Activated T-helper 1 cell treated with anti-CD3 and anti-CD28 coated beads, Interleukin-12 subunit alpha, Interleukin-12 subunit beta, Interleukin-2, Interleukin-4 antibody, amounts not matched to agents 30 ng/mL and 10 ng/mL and 1 ng/mL, durations not matched to agents 14 hours and 24 hours and 36 hours (primary cell): ENCODE measurements at regions of chr11 and their contacts with region 1.

Region 1: DNA sequence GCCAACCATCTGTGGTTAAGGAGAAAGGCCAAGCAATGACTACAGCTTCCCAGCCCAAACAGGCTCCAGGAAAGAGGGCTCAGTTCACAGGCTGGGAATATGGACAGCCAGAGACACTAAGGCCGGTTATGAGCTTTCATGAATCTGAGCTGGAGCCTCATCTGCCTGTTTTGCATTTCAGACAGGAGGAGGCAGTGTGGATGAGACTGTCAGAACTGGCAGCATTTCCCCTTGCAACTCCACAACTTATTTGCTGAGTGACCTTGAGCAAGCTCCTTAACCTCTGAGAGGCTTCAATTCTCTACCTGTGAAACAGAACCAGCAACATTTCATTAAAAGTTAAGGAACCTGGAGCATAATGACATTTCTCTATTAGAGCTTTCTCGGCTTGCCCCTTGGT is 264.0 kb downstream of the ETS1 start:
- DNase-seq: no peak
- H3K4me3 Mint-ChIP-seq: peak overlapping the region; percentile 70
- H3K27ac Mint-ChIP-seq: peak overlapping the region; percentile 95
- H3K4me1 Mint-ChIP-seq: peaks cover 91% of the 10 kb centered on the region
- H3K27me3 Mint-ChIP-seq: no peaks in the 10 kb centered on the region

Region 2: GRCh38 chr11:128135451-128135850 is 187.9 kb before region 1 on chr11:
- intact Hi-C with region 1: no loop called
- DNase-seq: no peak
- H3K4me3 Mint-ChIP-seq: no peak overlapping the region
- H3K27ac Mint-ChIP-seq: no peak overlapping the region
- H3K4me1 Mint-ChIP-seq: no peaks in the 10 kb centered on the region
- H3K27me3 Mint-ChIP-seq: peaks cover 3% of the 10 kb centered on the region

Region 3: DNA sequence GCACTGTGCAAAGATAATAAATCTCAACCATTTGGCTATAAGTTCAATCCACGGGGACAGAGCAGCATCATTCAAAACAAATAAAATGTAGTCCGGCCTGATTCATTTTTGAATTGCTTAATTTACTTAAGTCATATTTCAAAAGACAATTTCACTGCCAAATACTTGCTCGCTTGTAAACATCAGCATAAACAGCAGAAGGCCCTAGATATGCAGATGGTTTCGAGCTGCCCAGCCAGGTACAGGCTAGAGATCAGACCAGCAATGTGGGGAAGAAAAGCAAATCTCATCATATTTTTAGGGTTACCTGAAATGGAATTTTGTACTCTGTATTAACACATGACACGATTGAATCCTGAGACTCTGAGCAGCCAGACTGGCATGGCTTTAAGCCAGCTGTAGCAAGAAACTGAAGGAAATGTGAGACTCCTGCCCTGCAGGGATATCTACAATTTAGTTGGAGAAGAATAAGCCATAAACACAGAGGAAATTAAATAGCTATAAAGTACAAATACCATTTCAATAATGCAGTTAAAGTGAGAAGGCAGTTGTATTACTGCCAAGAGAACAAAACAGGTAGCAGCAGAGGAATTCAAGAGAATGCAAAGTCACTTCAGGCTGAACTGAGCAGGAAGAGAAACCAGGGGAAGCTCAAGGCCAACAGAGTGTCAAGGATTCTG is 176.3 kb before region 1 on chr11:
- intact Hi-C with region 1: no loop called
- DNase-seq: no peak
- H3K4me3 Mint-ChIP-seq: no peak overlapping the region
- H3K27ac Mint-ChIP-seq: no peak overlapping the region
- H3K4me1 Mint-ChIP-seq: no peaks in the 10 kb centered on the region
- H3K27me3 Mint-ChIP-seq: peaks cover 13% of the 10 kb centered on the region

Region 4: GRCh38 chr11:128232588-128232987 is 90.8 kb before region 1 on chr11:
- intact Hi-C with region 1: loop called (anchors 1 kb)
- DNase-seq: no peak
- H3K4me3 Mint-ChIP-seq: peak overlapping the region; percentile 58
- H3K27ac Mint-ChIP-seq: peak overlapping the region; percentile 85
- H3K4me1 Mint-ChIP-seq: peaks cover 58% of the 10 kb centered on the region
- H3K27me3 Mint-ChIP-seq: peaks cover 2% of the 10 kb centered on the region

Region 5: DNA sequence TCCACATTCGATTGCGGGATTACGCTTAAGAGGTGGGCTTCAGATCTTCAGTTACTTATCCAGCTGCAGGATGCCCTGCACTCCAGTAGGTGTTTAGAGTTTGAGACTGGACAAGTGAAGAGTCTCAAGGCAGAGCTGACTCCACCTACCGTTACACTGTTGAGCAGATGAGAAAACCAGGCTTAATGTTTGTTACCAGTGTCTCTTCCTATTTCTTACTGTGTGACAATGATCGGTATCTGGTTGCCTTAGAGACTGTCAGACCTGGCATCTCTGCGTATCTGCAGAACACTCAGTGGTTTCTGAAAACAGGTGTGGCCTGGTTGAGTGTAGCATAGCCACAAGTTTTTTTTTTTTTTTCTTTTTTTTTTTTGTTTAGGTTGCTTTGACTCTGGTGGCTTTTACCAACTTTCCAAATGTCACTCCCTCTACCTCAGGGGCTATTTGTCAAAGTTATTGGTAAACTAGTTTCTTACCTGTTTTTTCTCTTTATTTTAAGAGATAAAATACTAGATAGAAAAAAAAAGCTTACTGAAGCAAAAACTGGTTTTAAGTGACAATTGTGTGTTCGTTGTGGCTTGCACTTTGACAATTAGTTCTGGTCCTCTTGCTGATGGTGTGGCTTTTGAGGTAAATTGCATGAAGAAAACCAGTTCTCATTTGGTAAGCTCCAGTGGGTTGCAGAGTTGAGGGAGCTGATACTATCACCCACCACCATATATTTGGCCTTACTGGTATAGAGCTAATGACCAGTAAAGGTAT is 20.8 kb before region 1 on chr11:
- intact Hi-C with region 1: loop called (anchors 1 kb)
- DNase-seq: peak; percentile 79
- H3K4me3 Mint-ChIP-seq: peak overlapping the region; percentile 91
- H3K27ac Mint-ChIP-seq: peak overlapping the region; percentile 97
- H3K4me1 Mint-ChIP-seq: peaks cover 85% of the 10 kb centered on the region
- H3K27me3 Mint-ChIP-seq: no peaks in the 10 kb centered on the region

Region 6: DNA sequence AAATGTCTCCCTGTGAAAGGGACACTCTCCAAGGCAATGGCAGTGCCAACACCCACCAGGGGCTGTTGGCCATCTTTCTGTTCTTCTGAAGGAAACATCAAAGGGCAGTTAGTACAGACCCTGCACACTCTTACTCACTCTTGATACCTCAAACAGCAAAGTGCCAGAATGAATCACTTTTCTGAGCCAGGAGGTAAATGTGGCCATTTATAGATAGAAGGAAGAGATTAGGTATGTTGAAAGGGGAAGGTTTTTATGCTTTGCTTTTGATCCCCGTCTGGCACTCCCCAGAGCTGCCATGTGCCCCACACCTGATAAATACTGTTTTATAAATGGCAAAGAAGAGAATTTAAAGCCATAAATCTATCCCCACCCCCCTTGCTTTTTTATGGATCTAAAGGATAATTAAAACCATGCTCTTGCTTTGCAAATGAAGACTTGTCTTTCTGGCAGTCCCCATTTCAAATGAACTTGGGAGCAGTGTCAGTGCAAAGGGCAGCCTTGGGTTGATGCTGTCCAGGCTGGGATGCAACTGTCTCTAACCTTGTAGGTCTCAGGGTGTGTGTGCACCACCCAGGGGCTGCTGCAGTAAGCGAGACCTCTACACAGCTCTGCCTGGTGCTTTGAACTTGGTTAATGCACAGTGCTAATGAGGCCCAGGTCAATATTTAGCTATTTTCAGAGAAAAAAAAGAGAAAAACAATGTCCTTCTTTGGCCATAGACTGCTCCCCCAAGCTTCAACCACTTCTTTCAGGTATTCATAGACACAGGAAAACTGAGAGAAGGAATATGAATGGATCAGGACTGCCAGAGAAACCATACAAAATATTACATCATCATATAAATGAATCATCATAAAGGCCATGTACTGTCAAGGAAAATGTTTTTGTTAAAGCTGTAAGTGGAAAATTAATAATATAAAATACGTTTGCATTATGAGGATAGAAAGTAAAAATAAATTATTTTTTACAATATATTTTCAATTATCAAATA is 56.5 kb after region 1 on chr11:
- intact Hi-C with region 1: loop called (anchors 1 kb)
- DNase-seq: peak; percentile 9
- H3K4me3 Mint-ChIP-seq: no peak overlapping the region
- H3K27ac Mint-ChIP-seq: peak overlapping the region; percentile 45
- H3K4me1 Mint-ChIP-seq: peaks cover 28% of the 10 kb centered on the region
- H3K27me3 Mint-ChIP-seq: no peaks in the 10 kb centered on the region